Dendritic cell treated with granulocyte-macrophage colony-stimulating factor and Interleukin-4, amounts not matched to agents 40 ng/mL and 50 ng/mL, for 4 days (primary cell): ENCODE measurements at regions of chr15 and their contacts with region 1.

Region 1: DNA sequence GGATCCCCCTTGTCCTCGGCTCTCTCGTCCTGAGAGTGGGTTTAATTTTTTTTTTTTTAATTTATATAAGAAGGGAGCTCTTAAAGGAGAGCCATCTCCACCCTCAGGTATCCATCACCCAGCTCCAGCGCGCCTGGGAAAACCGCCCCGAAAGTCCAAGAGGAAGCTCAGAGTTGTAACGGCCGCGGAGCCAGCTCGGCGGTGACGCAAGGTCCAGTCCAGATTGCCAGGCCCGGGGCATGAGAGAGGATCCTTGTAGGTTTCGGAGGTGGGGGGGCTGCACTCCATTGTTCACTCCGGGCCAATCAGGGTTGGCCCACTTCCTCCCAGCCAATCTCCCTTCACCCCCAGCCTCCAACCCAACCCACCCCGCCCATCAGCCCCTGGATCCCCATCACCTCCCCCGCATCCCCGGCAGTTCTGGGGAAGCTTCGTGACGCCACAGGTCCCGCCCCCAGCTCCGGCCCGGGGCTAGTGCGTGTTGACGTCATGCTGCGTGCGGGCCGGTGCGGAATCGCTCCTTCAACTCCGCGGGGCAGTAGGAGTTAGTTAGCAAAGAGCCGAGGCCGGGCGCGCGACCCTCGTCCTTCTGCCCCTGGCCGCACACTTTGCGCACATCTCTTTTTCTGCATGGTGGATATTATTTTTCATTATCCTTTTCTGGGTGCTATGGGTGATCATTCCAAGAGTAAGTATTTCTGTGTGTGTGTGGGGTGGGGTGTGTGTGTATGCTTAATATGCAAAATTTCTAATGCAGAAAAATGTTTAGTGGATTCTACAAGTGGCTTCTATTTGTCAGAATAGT is at the start of gene ISL2:
- H3K4me3 Mint-ChIP-seq: peak within 1 kb of the TSS; percentile 88
- H3K27ac Mint-ChIP-seq: peak within 1 kb of the TSS; percentile 95
- H3K4me1 Mint-ChIP-seq: peaks cover 65% of the 10 kb centered on the region
- H3K27me3 Mint-ChIP-seq: peaks cover 71% of the 10 kb centered on the region

Region 2: GRCh38 chr15:76169013-76169412 is 167.4 kb before region 1 on chr15:
- intact Hi-C with region 1: loop called (anchors 2 kb)
- H3K4me3 Mint-ChIP-seq: peak overlapping the region; percentile 68
- H3K27ac Mint-ChIP-seq: peak overlapping the region; percentile 94
- H3K4me1 Mint-ChIP-seq: peaks cover 73% of the 10 kb centered on the region
- H3K27me3 Mint-ChIP-seq: peaks cover 4% of the 10 kb centered on the region

Region 3: DNA sequence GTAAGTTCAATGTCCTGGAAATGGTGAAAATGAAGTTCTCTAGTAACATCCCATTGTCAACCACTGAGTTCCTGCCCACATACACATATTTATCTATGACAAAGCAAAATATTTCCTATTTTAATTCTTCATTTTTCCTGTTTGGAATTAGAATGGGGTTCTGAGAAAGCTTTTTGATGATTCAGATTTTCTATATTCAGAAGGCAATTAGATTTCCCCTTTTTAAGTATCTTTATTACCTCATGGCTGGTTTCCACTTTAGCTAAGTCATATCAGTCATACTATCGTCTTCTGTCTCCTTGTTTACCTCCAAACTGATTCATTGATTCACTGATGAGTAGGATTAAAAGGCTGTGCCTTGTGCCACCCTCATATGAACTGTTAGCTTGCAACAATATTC is 43.1 kb before region 1 on chr15:
- intact Hi-C with region 1: loop called (anchors 5 kb)
- H3K4me3 Mint-ChIP-seq: no peak overlapping the region
- H3K27ac Mint-ChIP-seq: peak overlapping the region; percentile 45
- H3K4me1 Mint-ChIP-seq: peaks cover 25% of the 10 kb centered on the region
- H3K27me3 Mint-ChIP-seq: no peaks in the 10 kb centered on the region